Ovary (tissue), 10 donors: ENCODE measurements at regions of chrX and their contacts with region 1.

Region 1: DNA sequence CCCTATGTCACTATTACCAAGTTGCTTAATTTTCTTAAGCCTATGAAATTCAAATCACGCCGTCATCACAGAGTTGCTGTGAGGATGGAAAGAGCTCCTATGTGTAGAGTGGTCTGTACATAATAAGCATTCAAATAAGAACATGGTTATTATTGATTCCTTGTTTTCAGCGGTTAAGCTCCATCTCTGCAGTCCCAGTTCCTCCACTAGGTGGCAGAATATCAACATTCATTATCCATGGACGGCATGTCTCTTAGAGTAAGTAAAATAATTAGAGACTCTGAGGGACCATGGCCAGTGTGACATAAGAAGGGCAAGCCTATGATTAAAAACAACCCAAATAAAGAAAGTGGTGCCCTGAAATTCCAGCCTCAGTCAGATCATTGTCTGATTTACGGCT is 132.5 kb upstream of the NHS start:
- DNase-seq: peak in 2 of 5 donors; percentile 32 to 55
- H3K4me3 ChIP-seq: no peak overlapping the region
- H3K27ac ChIP-seq: no peak overlapping the region
- H3K4me1 ChIP-seq: no peaks in the 10 kb centered on the region
- H3K27me3 ChIP-seq: no peaks in the 10 kb centered on the region
- CTCF ChIP-seq: peak; percentile 26 to 73 (median 66)
- EP300 ChIP-seq: no peak
- POLR2A ChIP-seq: no peak

Region 2: DNA sequence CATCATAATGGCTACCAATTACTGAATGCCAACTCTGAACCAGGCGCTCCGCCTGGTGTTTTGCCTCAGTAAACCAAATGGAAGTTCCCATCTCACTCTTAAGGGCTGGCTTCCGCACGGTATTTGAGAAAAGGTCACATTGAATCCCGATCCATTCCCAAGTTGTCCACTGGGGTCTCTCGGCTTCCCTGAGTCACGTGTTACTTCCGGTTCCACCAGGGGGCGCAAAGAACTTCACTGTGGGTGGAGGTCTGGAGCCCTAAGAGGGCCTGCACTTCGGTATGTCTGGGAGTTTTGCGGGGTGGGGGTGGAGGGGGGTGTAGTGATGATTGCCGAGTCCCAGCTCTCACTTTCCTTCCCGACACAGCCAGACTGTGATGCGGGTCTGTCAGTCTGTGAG is 119.2 kb after region 1 on chrX:
- intact Hi-C with region 1: loop called in 1 of 4 experiments (anchors 10 kb)
- DNase-seq: peak in 1 of 5 donors; percentile 24
- H3K4me3 ChIP-seq: no peak overlapping the region
- H3K27ac ChIP-seq: no peak overlapping the region
- H3K4me1 ChIP-seq: no peaks in the 10 kb centered on the region
- H3K27me3 ChIP-seq: no peaks in the 10 kb centered on the region
- CTCF ChIP-seq: no peak
- EP300 ChIP-seq: no peak
- POLR2A ChIP-seq: no peak

Region 3: GRCh38 chrX:17590892-17591740 is 348.6 kb after region 1 on chrX:
- intact Hi-C with region 1: loop called in 2 of 4 experiments (anchors 5 to 10 kb)
- DNase-seq: peak; percentile 49 to 73 (median 60)
- H3K4me3 ChIP-seq: no peak overlapping the region
- H3K27ac ChIP-seq: peak overlapping the region in 1 of 2 donors; percentile 1
- H3K4me1 ChIP-seq: peaks cover 3% of the 10 kb centered on the region
- H3K27me3 ChIP-seq: no peaks in the 10 kb centered on the region
- CTCF ChIP-seq: peak; percentile 29 to 65 (median 56)
- EP300 ChIP-seq: no peak
- POLR2A ChIP-seq: no peak

Region 4: DNA sequence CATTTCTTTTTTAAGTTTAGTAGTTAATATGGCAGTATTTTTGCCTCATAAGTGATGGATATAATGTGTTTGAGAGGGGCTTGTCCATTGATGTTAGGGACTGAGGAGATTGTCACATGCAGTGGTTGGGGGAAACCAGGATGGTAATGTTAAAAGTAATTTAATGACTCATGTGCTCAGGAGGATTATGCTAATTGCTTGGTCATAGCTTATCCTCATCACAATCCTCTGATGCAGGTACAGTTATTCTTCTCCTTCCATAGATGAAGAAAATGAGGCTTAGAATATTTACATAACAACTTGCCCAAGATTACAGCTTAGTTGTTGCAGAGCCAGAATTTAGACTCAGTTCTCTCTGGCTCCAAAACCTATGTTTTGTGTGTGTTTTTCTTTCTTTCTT is 400.4 kb after region 1 on chrX:
- intact Hi-C with region 1: no loop called
- DNase-seq: no peak
- H3K4me3 ChIP-seq: no peak overlapping the region
- H3K27ac ChIP-seq: no peak overlapping the region
- H3K4me1 ChIP-seq: no peaks in the 10 kb centered on the region
- H3K27me3 ChIP-seq: no peaks in the 10 kb centered on the region
- CTCF ChIP-seq: no peak
- EP300 ChIP-seq: no peak
- POLR2A ChIP-seq: no peak

Region 5: GRCh38 chrX:17680732-17681413 is 438.4 kb after region 1 on chrX:
- intact Hi-C with region 1: loop called in 3 of 4 experiments (anchors 5 kb)
- DNase-seq: no peak
- H3K4me3 ChIP-seq: no peak overlapping the region
- H3K27ac ChIP-seq: no peak overlapping the region
- H3K4me1 ChIP-seq: no peaks in the 10 kb centered on the region
- H3K27me3 ChIP-seq: no peaks in the 10 kb centered on the region
- CTCF ChIP-seq: no peak
- EP300 ChIP-seq: no peak
- POLR2A ChIP-seq: no peak

Region 6: DNA sequence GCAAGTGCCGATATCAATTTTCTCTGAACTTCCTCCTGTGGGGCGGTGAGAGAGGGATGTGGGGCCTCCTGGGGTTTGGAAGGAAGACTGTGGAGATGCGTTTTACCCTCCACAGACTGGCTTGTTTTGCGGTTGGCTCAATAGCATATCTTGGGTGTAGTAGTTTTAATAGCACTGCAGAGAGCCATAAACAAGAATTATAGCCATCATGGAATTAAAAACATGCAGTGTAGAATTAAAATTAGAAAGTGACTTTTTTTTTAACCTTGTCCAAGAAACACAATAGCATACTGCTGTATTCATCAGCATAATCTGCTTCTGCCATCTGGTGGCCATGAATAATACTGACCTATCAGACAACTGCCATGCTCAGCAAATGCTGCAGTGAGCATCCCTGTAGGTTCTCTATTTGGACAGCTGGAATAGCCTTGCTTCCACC is 447.5 kb after region 1 on chrX:
- intact Hi-C with region 1: loop called in 1 of 4 experiments (anchors 5 kb)
- DNase-seq: peak; percentile 23 to 71 (median 48)
- H3K4me3 ChIP-seq: no peak overlapping the region
- H3K27ac ChIP-seq: no peak overlapping the region
- H3K4me1 ChIP-seq: no peaks in the 10 kb centered on the region
- H3K27me3 ChIP-seq: no peaks in the 10 kb centered on the region
- CTCF ChIP-seq: peak in 2 of 3 donors; percentile 68 to 71
- EP300 ChIP-seq: no peak
- POLR2A ChIP-seq: no peak